ENCODE measurements at regions of chr1 and their contacts with region 1.

Region 1: DNA sequence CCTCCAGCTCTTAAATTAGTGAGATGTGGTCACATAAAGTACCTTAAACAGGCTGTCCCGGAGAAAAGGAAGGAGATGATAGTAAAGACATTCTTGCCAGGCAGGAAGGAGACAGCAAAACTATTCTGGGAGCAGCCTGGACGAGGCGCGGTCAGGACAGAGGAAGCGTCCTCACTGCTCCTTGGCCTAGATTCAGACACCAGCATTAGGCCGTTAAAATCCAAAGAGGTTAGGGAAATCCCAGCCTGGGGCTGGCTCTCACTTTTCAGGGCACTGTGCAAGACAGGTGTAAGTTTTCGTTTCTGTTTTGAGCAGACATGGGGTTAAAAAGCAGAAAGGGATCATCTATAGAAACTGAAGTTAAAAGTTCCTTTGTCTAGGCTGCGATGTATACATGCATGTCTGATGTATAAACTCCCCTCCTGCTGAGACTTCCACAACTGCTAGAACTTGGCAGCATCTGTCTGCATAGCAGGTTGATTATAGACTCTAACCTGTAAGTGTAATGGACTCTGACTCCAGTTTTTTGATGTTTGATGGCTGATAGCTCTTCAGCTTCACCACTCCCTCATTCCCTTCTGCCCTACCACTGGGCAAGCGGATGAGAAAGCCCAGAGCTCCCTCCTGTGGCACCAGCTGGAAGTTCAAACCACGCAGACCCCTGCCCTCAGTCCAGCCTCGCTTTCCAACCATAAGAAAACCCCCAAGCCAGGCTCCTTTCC is 21.5 kb downstream of the STPG1 start:
- DNase-seq: peak; percentile 75
- ATAC-seq: peak; percentile 80
- H3K4me3 Mint-ChIP-seq: peak overlapping the region; percentile 59
- H3K27ac Mint-ChIP-seq: peak overlapping the region; percentile 95
- H3K4me1 Mint-ChIP-seq: peaks cover 41% of the 10 kb centered on the region
- H3K27me3 Mint-ChIP-seq: no peaks in the 10 kb centered on the region
- CTCF ChIP-seq: peak; percentile 84

Region 2: GRCh38 chr1:24150234-24151174 is 241.5 kb before region 1 on chr1:
- CTCF ChIA-PET with region 1: interaction called, 87 read pairs
- POLR2A ChIA-PET with region 1: interaction called, 5 read pairs
- intact Hi-C with region 1: no loop called
- DNase-seq: peak; percentile 95
- ATAC-seq: peak; percentile 97
- H3K4me3 Mint-ChIP-seq: peak overlapping the region; percentile 61
- H3K27ac Mint-ChIP-seq: no peak overlapping the region
- H3K4me1 Mint-ChIP-seq: peaks cover 18% of the 10 kb centered on the region
- H3K27me3 Mint-ChIP-seq: peaks cover 36% of the 10 kb centered on the region
- CTCF ChIP-seq: peak; percentile 95

Region 3: DNA sequence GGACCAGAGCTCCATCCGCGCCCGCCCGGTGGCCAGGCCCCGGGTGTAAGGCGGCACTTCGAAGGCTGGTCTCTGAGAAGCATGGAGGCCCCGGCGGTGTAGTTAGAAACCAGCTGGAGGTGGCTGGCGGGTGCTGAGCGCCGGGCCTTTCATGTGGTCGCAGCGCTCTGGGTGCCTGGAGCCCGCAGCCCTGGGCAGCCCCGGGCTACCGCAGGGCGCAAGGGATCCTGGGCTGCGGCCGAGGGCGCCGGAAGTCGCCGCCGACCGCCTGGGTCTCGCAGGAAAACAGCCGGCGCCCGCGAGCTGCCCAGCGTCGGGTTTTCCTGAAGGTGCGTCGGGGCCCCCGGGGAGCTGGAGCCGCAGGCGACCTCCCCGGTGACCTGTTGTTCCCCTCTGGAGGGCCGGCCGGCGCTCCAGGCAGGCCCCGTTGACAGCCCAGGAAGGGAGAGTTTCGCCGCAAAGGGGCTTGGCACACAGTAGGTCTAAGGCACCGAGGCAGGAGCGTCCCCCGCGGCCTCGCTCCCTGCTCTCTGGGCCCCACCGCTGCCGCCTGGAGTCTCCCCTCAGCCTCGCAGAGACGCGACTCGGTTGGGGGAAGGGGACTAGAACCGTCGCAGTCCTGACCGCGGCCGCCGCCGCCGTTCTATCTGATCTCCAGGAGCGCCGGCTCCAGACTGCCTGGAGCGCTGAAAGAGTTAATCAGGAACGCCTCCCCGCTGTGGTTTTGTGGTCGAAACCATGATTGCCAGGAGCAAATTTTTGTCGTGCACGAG is 70.2 kb before region 1 on chr1:
- CTCF ChIA-PET with region 1: interaction called, 29 read pairs
- POLR2A ChIA-PET with region 1: interaction called, 3 read pairs
- intact Hi-C with region 1: loop called (anchors 5 kb)
- DNase-seq: peak; percentile 87
- ATAC-seq: peak; percentile 81
- H3K4me3 Mint-ChIP-seq: peak overlapping the region; percentile 60
- H3K27ac Mint-ChIP-seq: no peak overlapping the region
- H3K4me1 Mint-ChIP-seq: peaks cover 41% of the 10 kb centered on the region
- H3K27me3 Mint-ChIP-seq: peaks cover 76% of the 10 kb centered on the region
- CTCF ChIP-seq: no peak

Region 4: GRCh38 chr1:24379733-24380315 is 12.2 kb before region 1 on chr1:
- CTCF ChIA-PET with region 1: interaction called, 28 read pairs
- POLR2A ChIA-PET with region 1: interaction called, 6 read pairs
- intact Hi-C with region 1: no loop called
- DNase-seq: no peak
- ATAC-seq: no peak
- H3K4me3 Mint-ChIP-seq: no peak overlapping the region
- H3K27ac Mint-ChIP-seq: no peak overlapping the region
- H3K4me1 Mint-ChIP-seq: peaks cover 8% of the 10 kb centered on the region
- H3K27me3 Mint-ChIP-seq: no peaks in the 10 kb centered on the region
- CTCF ChIP-seq: no peak

Region 5: GRCh38 chr1:24421502-24421901 is 29.5 kb after region 1 on chr1:
- CTCF ChIA-PET with region 1: interaction called, 103 read pairs
- POLR2A ChIA-PET with region 1: no interaction called
- intact Hi-C with region 1: no loop called
- DNase-seq: no peak
- ATAC-seq: no peak
- H3K4me3 Mint-ChIP-seq: no peak overlapping the region
- H3K27ac Mint-ChIP-seq: no peak overlapping the region
- H3K4me1 Mint-ChIP-seq: peaks cover 57% of the 10 kb centered on the region
- H3K27me3 Mint-ChIP-seq: no peaks in the 10 kb centered on the region
- CTCF ChIP-seq: no peak

Region 6: DNA sequence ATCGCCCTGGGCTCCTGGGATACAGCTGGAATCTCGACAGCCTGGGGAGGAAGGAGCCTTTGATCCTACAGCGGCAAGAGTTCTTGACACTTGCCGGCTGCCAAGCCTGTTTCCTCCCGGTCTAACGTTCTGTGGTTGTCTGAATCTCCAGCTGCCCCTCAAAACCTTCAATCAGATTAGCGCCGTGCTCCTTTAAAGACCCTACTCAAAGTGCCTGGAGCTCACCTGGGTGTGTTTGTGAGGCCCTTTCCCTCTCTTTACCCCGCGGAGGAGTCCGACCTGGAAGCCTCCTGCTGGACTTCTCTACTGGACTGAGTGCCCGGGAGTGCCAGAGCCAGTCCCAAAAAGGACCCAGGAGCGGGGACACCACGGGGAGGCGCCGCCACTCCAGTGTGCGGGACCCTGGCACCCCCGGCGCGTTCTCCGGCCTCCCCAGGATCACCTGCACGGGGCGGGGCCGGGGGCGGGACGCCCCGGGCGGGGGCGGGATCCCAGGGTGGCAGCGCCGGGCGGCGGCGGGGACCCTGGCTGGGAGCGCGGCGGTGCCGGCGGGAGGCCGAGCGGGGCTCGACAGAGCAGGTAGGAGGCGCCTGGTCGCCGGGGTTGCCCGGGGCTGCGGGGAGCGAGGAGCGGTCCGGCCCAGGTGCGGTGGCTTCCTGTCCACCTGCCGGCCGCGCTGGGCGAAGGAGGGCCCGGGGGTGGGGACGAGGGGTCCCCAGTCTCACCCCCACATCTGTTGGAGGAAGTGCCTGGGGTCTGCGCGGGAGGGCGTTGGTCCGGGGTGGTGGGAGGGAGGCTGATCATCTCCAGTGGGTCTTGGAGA is 163.8 kb after region 1 on chr1 and contains the start of gene NCMAP:
- CTCF ChIA-PET with region 1: no interaction called
- POLR2A ChIA-PET with region 1: no interaction called
- intact Hi-C with region 1: no loop called
- DNase-seq: peak; percentile 39
- ATAC-seq: peak; percentile 77
- H3K4me3 Mint-ChIP-seq: peak within 1 kb of the TSS; percentile 58
- H3K27ac Mint-ChIP-seq: no peak within 1 kb of the TSS
- H3K4me1 Mint-ChIP-seq: peaks cover 11% of the 10 kb centered on the region
- H3K27me3 Mint-ChIP-seq: peaks cover 19% of the 10 kb centered on the region
- CTCF ChIP-seq: no peak
- total RNA-seq, gene NCMAP: 0.11 to 0.20 TPM

Region 7: DNA sequence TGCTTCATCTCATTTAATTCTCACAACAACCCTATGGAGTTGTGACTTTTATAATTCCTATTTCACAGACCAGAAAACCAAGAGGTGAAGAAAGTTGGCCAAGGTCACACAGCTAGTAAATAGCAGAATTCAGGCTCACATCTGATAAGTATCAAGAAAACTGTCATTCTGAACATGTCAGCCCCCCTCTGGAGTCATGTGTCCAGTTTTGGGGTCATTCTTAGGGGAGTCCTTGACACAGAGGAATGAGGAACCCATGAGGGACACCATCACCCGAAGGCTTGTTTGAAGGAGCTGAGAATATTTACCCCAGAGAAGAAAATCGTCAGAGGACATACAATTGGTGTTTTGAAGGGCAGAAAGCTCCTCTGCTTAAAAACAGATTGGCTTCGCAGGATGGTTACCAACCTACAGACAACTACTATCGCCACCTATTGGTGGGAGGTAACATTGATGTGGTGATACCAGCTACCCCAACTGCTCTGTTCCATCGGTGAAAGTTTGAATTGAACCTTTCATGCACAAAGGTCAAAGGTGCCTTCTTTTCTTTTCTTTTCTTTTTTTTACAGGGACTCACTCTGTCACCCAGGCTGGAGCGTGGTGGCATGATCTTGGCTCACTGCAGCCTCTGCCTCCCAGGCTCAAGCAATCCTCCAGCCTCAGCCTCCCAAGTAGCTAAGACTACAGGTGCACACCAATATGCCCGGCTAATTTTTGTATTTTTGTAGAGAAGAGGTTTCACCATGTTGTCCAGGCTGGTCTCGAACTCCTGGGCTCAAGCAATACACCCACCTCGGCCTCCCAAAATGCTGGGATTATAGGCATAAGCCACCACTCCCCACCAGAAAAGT is 195.2 kb after region 1 on chr1:
- CTCF ChIA-PET with region 1: interaction called, 54 read pairs
- POLR2A ChIA-PET with region 1: no interaction called
- intact Hi-C with region 1: no loop called
- DNase-seq: peak; percentile 70
- ATAC-seq: peak; percentile 98
- H3K4me3 Mint-ChIP-seq: no peak overlapping the region
- H3K27ac Mint-ChIP-seq: peak overlapping the region; percentile 78
- H3K4me1 Mint-ChIP-seq: peaks cover 8% of the 10 kb centered on the region
- H3K27me3 Mint-ChIP-seq: no peaks in the 10 kb centered on the region
- CTCF ChIP-seq: peak; percentile 71